ENCODE measurements at regions of chr1 and their contacts with region 1.

Region 1: DNA sequence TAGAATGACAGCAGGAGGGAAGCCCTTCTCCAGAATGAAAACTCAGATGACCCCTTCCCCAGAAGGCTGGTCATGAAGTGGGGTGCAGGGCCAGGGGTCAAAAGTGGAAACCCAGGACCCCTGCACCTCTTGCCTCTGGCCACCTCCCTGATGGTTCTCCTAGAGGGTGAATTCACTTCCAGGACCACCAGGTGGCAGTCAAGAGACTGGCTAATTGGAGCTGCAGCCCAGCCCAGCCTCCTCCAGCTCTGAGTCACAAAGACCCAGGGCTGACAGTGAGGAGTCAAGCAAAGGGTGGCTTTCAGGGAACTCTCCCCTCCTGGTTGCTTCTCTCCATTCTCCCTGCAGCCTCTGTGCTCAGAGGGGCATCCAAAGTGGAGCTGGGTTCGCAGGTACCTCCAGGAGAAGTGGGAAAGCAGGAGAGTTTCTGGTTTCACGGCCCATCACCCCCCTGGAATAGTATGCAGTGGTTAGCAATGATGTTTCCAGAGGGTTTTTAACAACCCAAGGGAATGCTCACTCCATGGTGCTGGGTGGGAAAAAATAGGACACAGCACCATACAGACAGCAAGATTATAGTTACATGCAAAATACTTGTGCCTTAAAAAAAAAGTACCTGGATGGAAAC is 6.1 kb upstream of the EPHB2 start:
- DNase-seq: peak; percentile 90
- ATAC-seq: peak; percentile 100
- H3K4me3 Mint-ChIP-seq: no peak overlapping the region
- H3K27ac Mint-ChIP-seq: no peak overlapping the region
- H3K4me1 Mint-ChIP-seq: no peaks in the 10 kb centered on the region
- H3K27me3 Mint-ChIP-seq: peaks cover 24% of the 10 kb centered on the region
- CTCF ChIP-seq: peak; percentile 78

Region 2: DNA sequence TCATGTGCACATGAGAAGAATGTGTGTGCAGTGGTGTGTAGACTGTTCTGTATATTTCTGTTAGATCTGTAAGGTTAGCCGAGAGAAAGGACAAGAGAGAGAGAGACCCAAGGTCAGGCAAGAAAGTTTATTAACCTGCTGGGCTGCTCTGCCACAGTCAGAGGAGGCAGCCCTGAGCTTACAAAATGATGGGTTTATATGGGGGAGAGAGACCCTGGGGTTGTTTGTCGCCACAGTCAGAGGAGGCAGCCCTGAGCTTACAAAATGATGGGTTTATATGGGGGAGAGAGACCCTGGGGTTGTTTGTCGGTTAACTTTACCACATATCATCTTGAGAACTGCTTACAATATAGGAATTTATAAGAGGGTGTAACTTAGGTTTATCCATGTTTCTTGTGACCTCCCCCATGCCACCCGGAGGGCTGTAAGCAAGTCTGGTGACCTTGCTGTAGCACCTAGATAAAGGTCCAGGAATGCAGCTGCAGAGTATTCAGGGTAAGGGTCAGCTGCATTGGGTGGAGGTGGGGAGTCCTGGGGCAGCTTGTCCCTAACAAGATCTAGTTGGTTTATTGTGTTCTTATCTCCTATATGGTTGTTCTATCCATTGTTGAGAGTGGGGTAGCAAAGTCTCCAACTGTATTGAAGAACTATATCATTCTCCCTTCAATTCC is 262.2 kb before region 1 on chr1:
- CTCF ChIA-PET with region 1: no interaction called
- POLR2A ChIA-PET with region 1: no interaction called
- intact Hi-C with region 1: no loop called
- DNase-seq: no peak
- ATAC-seq: no peak
- H3K4me3 Mint-ChIP-seq: no peak overlapping the region
- H3K27ac Mint-ChIP-seq: no peak overlapping the region
- H3K4me1 Mint-ChIP-seq: no peaks in the 10 kb centered on the region
- H3K27me3 Mint-ChIP-seq: peaks cover 3% of the 10 kb centered on the region
- CTCF ChIP-seq: no peak

Region 3: GRCh38 chr1:22582661-22583635 is 121.6 kb before region 1 on chr1:
- CTCF ChIA-PET with region 1: no interaction called
- POLR2A ChIA-PET with region 1: no interaction called
- intact Hi-C with region 1: no loop called
- DNase-seq: no peak
- ATAC-seq: no peak
- H3K4me3 Mint-ChIP-seq: no peak overlapping the region
- H3K27ac Mint-ChIP-seq: no peak overlapping the region
- H3K4me1 Mint-ChIP-seq: no peaks in the 10 kb centered on the region
- H3K27me3 Mint-ChIP-seq: peaks cover 2% of the 10 kb centered on the region
- CTCF ChIP-seq: no peak

Region 4: GRCh38 chr1:22600071-22600816 is 104.3 kb before region 1 on chr1:
- CTCF ChIA-PET with region 1: no interaction called
- POLR2A ChIA-PET with region 1: no interaction called
- intact Hi-C with region 1: no loop called
- DNase-seq: no peak
- ATAC-seq: no peak
- H3K4me3 Mint-ChIP-seq: no peak overlapping the region
- H3K27ac Mint-ChIP-seq: no peak overlapping the region
- H3K4me1 Mint-ChIP-seq: no peaks in the 10 kb centered on the region
- H3K27me3 Mint-ChIP-seq: peaks cover 13% of the 10 kb centered on the region
- CTCF ChIP-seq: no peak

Region 5: DNA sequence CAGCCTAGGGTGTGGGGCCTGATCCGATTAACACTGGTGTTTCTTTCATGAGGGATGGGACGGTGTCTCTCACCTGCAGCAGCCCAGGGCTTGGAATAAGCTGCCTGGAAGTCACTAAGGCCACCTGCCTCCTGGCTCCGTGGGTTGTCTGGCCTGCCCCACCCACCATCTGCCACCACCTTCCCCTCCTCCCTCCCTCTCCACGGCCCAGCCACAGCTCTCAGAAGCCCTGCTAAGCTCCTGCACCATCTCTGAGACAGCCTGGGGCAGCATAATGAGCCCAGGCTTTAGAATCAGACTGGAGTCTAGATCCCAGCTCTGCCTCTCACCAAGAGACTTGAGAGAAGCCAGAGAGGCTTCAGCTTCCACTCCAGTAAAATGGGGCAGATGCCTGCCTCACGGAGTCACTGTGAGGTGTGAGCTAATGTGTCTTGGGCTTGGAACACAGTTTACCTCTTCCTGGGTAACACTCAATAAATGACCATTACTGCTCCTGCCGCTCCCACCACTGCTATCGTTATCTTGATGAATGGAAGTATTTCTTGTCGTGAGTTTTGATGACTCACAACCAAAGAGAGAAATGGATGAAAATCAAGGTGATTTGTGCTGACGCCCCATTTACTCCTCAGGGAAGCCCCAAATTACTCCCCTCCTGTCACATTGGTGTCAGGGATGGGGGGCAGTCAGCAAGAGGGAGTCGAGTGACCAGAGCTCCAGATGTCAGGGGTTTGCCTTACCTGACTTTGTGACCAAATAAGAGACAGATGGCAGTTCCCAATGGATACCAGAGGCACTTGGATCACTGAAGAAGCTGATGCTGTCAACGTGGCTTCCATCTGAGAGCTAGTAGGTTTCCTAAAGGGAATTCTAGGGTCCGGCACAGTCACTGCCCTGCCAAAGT is 91.6 kb before region 1 on chr1:
- CTCF ChIA-PET with region 1: no interaction called
- POLR2A ChIA-PET with region 1: no interaction called
- intact Hi-C with region 1: no loop called
- DNase-seq: no peak
- ATAC-seq: no peak
- H3K4me3 Mint-ChIP-seq: no peak overlapping the region
- H3K27ac Mint-ChIP-seq: no peak overlapping the region
- H3K4me1 Mint-ChIP-seq: no peaks in the 10 kb centered on the region
- H3K27me3 Mint-ChIP-seq: peaks cover 15% of the 10 kb centered on the region
- CTCF ChIP-seq: no peak

Region 6: DNA sequence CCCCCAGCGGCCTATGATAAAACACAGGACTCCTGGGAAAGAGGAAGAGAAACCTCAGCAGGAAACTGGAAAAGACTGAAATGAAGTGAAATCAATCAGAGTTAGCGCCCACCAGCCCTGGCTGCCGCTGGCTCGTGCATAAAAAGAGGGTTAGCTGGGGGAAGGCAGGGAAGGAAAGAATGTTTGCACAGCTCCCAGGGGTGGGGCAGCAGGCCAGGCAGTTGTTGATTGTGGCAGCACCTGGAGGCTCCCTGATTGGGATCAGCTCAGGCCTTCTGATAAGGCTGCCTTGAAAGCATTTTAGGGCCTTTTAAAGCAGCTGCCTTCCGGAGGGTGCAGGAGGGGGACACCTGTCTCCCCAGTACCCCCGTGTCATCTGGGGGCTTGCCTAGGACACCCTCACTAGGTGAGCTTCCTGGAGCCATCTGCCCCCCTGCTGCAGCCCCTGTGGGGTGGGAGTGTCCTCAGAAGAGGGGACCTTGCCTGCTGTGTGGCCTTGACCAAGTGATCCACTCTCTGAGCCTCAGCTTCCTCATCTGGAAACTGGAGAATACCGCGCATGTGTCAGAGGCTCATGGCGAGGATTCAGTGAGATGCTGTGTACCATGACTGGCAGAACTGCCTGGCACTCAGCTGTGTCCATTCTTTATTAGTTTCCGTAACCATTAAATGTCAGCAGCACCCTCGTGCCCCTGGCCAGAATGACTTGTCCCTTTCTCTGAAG is 12.6 kb after region 1 on chr1:
- CTCF ChIA-PET with region 1: interaction called, 19 read pairs
- POLR2A ChIA-PET with region 1: no interaction called
- intact Hi-C with region 1: no loop called
- DNase-seq: no peak
- ATAC-seq: no peak
- H3K4me3 Mint-ChIP-seq: no peak overlapping the region
- H3K27ac Mint-ChIP-seq: no peak overlapping the region
- H3K4me1 Mint-ChIP-seq: peaks cover 5% of the 10 kb centered on the region
- H3K27me3 Mint-ChIP-seq: peaks cover 24% of the 10 kb centered on the region
- CTCF ChIP-seq: no peak

Region 7: GRCh38 chr1:22861764-22862440 is 157.3 kb after region 1 on chr1:
- CTCF ChIA-PET with region 1: interaction called, 11 read pairs
- POLR2A ChIA-PET with region 1: no interaction called
- intact Hi-C with region 1: no loop called
- DNase-seq: peak; percentile 43
- ATAC-seq: peak; percentile 42
- H3K4me3 Mint-ChIP-seq: no peak overlapping the region
- H3K27ac Mint-ChIP-seq: no peak overlapping the region
- H3K4me1 Mint-ChIP-seq: no peaks in the 10 kb centered on the region
- H3K27me3 Mint-ChIP-seq: peaks cover 3% of the 10 kb centered on the region
- CTCF ChIP-seq: peak; percentile 50

Region 8: DNA sequence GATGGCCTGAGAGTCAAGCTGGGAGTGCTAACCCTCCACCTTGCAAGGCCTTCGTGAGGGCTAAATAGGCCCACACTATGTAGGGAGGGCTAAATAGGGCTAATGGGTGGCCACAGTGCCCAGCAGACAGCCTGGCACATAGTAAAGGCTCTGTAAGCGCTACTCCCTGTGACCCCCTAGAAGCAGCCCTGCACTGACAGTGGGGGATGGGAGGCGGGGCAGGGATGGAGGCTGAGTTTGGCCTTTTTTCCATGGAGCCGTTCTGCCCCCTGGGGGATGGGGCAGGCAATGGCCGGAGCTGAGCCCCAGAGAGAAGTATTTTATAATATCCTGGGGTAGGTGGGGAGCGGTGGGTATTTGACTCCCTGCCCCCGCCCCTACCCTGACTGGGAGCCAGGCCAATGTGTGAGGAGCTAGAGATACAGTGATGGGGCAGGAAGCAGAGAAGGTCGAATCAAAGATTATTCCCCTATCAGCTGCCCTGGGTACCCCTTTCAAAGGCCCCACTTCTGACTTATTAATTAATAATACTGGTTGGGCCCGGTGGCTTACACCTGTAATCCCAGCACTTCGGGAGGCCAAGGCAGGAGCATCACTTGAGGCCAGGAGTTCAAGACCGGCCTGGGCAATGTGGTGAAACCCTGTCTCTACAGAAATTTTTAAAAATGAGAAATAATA is 225.8 kb after region 1 on chr1:
- CTCF ChIA-PET with region 1: interaction called, 16 read pairs
- POLR2A ChIA-PET with region 1: no interaction called
- intact Hi-C with region 1: no loop called
- DNase-seq: peak; percentile 46
- ATAC-seq: peak; percentile 78
- H3K4me3 Mint-ChIP-seq: no peak overlapping the region
- H3K27ac Mint-ChIP-seq: no peak overlapping the region
- H3K4me1 Mint-ChIP-seq: no peaks in the 10 kb centered on the region
- H3K27me3 Mint-ChIP-seq: peaks cover 17% of the 10 kb centered on the region
- CTCF ChIP-seq: peak; percentile 63

Measured in activated CD8-positive, alpha-beta T cell treated with anti-CD3 and anti-CD28 coated beads for 36 hours (primary cell).